Ascending aorta (tissue), 2 donors: ENCODE measurements at regions of chr19 and their contacts with region 1.

Region 1: DNA sequence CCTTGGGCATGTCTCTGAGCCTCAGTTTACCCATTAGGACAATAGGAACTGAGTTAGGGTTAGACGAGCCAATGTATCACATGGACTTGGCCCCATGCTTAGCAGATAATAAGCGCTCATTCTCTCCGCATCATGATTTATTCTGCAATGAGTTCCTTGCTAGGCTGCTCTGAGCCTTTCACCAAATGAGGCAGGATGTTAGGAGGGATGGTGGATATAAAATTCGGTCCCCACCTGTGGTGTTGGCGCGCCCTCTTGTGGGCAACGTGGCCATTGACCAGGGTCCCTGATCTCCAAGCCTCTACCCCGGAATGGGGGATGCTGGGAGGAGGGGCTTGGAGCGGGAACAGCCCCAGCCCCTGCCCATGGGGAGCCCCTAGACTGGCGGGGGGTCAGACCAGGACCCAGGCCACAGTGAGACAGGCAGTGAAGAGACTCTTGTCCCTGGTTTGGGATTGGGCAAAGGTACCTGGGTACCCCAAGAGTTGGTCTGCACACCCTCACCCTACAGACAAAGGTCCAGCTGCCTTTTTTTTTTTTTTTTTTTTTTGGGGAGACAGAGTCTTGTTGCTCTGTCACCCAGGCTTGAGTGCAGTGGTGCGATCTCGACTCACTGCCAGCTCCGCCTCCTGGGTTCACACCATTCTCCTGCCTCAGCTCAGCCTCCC is 43.9 kb downstream of the CERS4 start:
- DNase-seq: peak in 1 of 2 donors; percentile 82
- H3K4me3 ChIP-seq: no peak overlapping the region
- H3K27ac ChIP-seq: no peak overlapping the region
- H3K4me1 ChIP-seq: peaks cover 0 to 6% of the 10 kb centered on the region in 2 donors
- H3K27me3 ChIP-seq: no peaks in the 10 kb centered on the region
- CTCF ChIP-seq: peak; percentile 87 to 91 (median 88)

Region 2: GRCh38 chr19:7943444-7944176 is 309.4 kb before region 1 on chr19 and contains the start of gene TIMM44:
- intact Hi-C with region 1: loop called (anchors 2 kb)
- DNase-seq: peak; percentile 98 to 100
- H3K4me3 ChIP-seq: peak within 1 kb of the TSS; percentile 58 to 81
- H3K27ac ChIP-seq: peak within 1 kb of the TSS; percentile 91 to 93
- H3K4me1 ChIP-seq: peaks cover 0 to 13% of the 10 kb centered on the region in 2 donors
- H3K27me3 ChIP-seq: no peaks in the 10 kb centered on the region
- CTCF ChIP-seq: no peak
- total RNA-seq, gene TIMM44: 151 TPM

Region 3: GRCh38 chr19:8158411-8159074 is 94.5 kb before region 1 on chr19:
- intact Hi-C with region 1: loop called (anchors 1 kb)
- DNase-seq: no peak
- H3K4me3 ChIP-seq: no peak overlapping the region
- H3K27ac ChIP-seq: no peak overlapping the region
- H3K4me1 ChIP-seq: no peaks in the 10 kb centered on the region
- H3K27me3 ChIP-seq: no peaks in the 10 kb centered on the region
- CTCF ChIP-seq: peak; percentile 29 to 49 (median 46)

Region 4: GRCh38 chr19:8208922-8209461 is 44.1 kb before region 1 on chr19 and contains the start of gene CERS4:
- intact Hi-C with region 1: loop called (anchors 5 kb)
- DNase-seq: peak in 1 of 2 donors; percentile 80
- H3K4me3 ChIP-seq: peak within 1 kb of the TSS; percentile 75 to 92
- H3K27ac ChIP-seq: peak within 1 kb of the TSS; percentile 24 to 41
- H3K4me1 ChIP-seq: peaks cover 0 to 7% of the 10 kb centered on the region in 2 donors
- H3K27me3 ChIP-seq: no peaks in the 10 kb centered on the region
- CTCF ChIP-seq: no peak
- total RNA-seq, gene CERS4: 20.2 TPM